ENCODE measurements at regions of chr17 and their contacts with region 1.

Region 1: DNA sequence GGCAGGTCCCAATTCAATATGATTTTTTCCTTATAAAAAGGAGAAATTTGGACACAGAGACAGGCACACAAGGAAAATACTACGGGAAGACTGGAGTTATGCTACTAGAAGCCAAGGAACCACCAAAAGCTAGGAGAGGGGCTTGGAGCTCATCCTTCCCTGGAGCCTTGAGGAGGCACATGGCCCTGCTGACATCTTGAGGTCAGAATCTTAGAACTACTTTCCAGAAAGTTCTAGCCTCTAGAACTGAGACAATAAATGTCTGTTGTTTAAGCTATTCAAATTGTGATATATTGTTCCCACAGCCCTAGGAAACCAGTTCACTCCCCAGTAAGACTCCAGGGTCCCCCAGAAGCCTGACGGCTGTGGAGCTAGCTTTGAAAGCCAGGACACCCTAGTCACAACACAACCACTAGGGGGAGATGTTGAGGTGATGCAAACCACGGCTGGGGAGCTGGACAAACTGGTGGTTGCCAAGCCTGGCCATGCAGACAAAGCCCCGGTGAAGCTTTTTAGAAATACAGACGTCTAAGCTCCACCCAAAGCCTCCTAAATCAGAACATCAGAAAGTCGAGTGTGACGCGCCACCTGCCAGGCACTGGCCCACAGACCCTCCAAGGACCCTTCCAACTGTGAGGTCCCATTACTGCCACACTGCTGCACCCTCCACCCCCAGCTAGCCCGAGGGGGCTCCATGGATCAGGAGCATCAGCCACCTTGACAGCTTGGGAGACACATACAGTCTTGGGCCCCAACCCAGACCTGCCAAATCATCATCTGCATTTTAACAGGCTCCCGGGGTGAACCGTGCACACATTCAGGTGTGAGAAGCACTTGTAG is 106.4 kb downstream of the SLC39A11 start:
- DNase-seq: peak; percentile 91

Region 2: DNA sequence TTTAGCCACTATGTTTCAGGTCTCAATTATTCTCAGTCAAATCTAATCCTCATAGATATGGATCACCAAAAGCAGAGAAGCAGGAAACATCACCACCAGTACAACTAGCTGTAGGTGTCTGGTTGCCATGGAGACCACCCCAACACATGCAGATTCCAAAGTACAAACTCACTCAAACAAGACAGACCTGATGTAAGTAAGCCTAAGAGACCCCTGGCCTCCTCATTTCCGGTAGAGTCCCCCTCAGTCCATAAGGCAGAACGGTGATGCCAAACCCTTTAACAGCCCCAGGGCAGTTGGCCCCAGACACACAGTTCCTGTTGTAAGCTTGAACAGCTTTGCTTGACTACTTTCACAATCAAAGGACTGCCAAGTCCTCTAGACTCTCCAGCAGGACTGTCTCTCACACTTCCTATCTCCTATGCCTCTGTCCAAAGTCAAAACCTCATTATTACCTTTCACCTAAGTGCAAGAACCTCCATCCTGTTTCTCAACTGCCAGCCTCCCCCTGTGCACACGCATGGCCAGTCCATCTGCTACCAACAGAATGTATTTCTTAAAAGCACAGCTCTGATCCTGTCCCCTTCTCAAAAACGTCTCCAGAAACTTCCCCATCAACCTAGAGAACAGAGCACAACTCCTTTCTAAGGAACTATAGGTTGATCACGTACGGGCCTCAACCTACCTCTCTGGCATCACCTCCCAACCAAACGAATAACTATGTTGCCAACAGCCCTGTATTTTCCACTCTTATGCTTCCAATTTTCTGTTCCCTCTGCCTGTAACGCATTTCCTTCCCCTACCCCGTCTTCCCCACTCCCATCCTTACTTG is 82.4 kb after region 1 on chr17:
- in situ Hi-C with region 1: no loop called
- DNase-seq: peak; percentile 63

Region 3: DNA sequence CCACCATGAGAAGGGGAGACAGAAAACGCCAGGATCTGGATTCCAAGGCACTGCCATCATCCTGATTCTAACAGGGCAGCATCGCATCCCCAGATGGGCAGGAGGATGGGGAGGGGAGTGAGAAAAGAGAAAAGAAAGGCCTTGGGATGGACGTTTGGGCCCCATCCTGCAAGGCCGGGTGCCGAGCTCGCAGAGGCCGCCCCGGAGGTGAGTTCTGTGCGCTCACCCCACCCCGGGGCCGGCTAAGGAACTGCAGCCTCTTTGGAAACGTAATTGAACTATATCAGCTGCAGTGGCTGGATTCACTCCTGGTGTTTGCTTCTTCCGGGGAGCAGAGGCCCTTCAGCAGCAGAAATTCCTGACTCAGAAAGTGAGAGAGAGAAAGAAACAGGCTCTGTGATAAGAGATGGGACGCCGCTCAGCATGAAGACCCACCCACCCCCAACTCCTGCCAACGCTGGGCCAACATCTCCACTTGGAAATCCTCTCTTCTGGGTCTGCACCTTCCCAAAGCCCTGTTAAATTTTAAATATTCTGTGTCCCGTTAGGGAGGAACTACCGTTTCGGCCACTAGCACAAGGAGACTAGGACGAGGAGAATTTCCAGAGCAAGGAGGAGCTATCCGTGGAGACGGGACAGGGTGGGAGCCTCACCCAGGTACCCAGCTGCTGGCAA is 170.2 kb after region 1 on chr17:
- in situ Hi-C with region 1: loop called (anchors 25 kb)
- DNase-seq: peak; percentile 72

Region 4: DNA sequence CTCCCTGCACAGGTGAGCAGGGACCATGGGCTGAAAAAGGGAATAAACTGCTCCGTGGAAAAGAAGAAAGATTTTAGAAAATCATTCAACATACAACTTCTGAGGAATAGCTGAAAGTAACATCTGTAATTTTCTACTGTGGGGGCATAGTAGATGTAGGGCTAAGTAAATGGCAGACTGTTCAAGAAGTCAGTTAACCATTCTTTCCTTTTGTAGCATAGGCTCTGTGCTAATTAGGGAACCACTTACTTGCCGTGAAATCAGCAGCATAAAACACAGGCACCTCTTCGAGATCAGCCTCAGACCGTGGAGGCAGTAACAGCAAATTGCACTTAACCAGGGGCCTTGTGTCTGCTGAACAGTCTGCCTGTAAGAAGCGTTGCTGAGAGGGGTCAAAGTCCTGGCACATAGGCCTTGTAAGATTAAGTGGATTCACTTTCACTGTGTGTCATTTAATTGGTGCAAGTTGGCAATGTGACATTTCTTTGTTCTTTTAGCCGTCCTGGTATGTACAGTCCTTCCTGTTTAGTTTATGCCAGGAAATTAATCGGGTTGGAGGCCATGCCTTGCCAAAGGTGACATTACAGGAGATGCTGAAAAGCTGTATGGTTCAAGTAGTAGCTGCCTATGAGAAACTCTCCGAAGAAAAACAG is 217.2 kb after region 1 on chr17:
- in situ Hi-C with region 1: no loop called
- DNase-seq: peak; percentile 23

Measured in G401 (cell line).